ENCODE measurements at regions of chr1 and their contacts with region 1.

Region 1: DNA sequence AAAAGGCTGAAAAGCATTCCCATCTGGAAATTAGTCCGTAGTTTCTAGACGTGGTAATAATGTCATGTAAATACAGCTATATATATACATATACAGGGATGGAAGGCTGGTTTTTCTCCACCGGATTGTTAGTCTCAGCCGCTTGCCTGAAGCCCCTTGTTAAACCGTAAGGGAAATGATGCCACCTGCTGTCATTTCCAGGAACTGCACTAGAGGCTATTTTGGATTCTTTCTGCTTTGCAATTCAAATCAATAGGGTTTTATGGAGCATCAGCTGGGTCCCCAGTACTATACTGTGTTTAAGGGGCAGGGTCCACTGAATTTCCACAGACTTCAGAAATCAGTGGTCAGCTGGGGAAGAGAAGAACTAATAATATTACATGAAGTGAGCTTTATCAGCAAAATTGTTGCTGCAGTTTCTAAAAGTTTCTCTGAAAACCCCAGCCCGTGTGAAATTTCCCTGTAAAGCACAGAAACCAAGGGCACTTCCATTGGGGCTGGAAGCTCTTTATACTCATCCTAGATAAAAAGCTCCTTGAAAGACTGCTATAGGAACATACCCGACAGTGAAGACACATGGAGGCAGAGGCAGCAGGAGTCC is 33.8 kb upstream of the MPZL1 start:
- DNase-seq: peak; percentile 94
- H3K4me3 ChIP-seq: no peak overlapping the region
- H3K27ac ChIP-seq: no peak overlapping the region
- H3K4me1 ChIP-seq: peaks cover 42 to 51% (median 47%) of the 10 kb centered on the region in 4 donors
- H3K27me3 ChIP-seq: no peaks in the 10 kb centered on the region
- CTCF ChIP-seq: peak in 2 of 3 experiments; percentile 94 to 95
- EP300 ChIP-seq: no peak
- POLR2A ChIP-seq: no peak

Region 2: DNA sequence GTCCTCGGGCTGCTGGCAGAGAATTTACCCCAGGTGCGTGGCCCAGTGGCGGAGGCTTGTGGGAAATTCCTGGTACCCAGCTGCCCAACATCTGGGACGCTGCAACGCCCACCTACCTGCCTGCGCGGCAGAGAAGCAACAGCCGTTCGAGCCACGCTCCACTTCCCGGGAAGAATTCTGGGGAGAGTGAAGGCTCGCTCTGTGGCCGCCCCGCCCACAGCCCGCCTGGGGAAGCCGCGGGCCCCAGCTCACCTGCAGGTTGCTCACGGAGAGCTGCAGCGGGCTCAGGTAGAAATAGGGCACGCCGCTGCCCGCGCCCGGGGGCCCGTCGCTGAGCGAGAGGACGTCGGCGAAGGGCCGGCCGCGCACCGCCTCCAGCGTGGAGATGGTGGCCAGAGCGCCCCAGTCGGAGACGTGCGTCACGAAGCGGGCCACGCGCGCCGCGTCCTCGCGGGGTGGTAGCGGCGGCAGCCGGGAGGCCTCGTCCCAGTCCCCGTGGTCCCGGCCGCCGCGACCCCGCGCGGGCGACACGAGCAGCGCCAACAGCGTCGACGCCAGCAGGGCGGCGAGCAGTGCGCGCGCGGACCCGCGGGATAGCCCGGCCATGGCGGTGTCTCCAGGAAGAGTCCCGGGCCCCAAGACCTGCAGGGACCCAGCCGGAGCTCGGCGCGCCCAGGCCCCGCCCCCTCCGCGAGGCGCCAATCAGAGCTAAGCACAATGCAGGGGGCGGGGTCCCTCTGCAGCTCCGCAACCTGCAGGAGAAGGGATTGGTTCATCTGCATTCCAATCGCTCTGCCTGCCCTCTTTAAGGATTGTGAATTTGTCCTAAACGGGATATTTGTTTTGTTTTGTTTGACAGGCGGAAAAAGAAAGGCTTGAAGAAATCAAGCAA is 134.6 kb before region 1 on chr1 and contains the start of gene CREG1:
- intact Hi-C with region 1: loop called (anchors 5 kb)
- DNase-seq: peak; percentile 96
- H3K4me3 ChIP-seq: peak within 1 kb of the TSS; percentile 81 to 91 (median 89)
- H3K27ac ChIP-seq: peak within 1 kb of the TSS; percentile 85 to 92 (median 88)
- H3K4me1 ChIP-seq: peaks cover 10 to 55% (median 46%) of the 10 kb centered on the region in 4 donors
- H3K27me3 ChIP-seq: no peaks in the 10 kb centered on the region
- CTCF ChIP-seq: peak in 1 of 3 experiments; percentile 14
- EP300 ChIP-seq: no peak
- POLR2A ChIP-seq: peak; percentile 83
- total RNA-seq, gene CREG1: 121 to 203 (median 158) TPM

Region 3: DNA sequence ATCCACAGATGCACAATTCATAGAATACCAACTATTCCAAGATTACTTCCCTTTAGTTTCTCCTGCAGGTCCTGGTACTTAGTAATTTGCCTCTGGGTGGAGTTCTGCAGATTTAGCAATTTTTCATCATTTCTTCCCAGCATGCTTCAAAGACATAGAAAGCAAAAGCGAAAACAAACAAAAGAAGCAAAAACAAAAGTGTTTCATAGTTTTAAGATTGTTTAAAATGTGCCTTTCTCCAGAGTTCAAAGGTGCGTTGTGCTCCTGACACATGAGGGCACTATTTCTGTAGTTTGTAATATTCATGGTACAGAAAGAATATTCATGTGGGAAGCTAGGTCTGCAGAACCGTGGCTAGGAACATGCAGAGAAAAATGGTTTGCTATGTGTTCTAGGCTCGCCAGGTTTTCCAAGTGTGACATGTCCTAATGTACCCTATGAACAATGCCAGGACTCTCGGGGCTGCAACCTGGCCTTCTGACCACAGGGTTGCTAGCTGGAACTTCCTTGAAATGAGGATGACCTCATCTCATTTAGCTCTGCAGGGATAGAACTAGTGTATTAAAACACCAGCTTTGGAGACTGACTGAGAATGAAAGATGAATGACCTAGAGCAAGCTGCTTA is 88.0 kb before region 1 on chr1:
- intact Hi-C with region 1: loop called (anchors 1 kb)
- DNase-seq: no peak
- H3K4me3 ChIP-seq: no peak overlapping the region
- H3K27ac ChIP-seq: no peak overlapping the region
- H3K4me1 ChIP-seq: peaks cover 25 to 34% (median 32%) of the 10 kb centered on the region in 4 donors
- H3K27me3 ChIP-seq: no peaks in the 10 kb centered on the region
- CTCF ChIP-seq: peak; percentile 51 to 70 (median 66)
- EP300 ChIP-seq: no peak
- POLR2A ChIP-seq: no peak

Region 4: GRCh38 chr1:167899253-167899681 is 211.2 kb after region 1 on chr1:
- intact Hi-C with region 1: no loop called
- DNase-seq: no peak
- H3K4me3 ChIP-seq: no peak overlapping the region
- H3K27ac ChIP-seq: no peak overlapping the region
- H3K4me1 ChIP-seq: peaks cover 0 to 12% (median 10%) of the 10 kb centered on the region in 4 donors
- H3K27me3 ChIP-seq: no peaks in the 10 kb centered on the region
- CTCF ChIP-seq: no peak
- EP300 ChIP-seq: no peak
- POLR2A ChIP-seq: no peak